ENCODE measurements at regions of chr15 and their contacts with region 1.

Region 1: GRCh38 chr15:77959432-77959879 is 118.1 kb downstream of the TBC1D2B start:
- DNase-seq: peak; percentile 91
- H3K4me3 ChIP-seq: peak overlapping the region; percentile 29 to 39; a peak in 2 of 4 replicates
- H3K27ac ChIP-seq: no peak overlapping the region
- H3K4me1 ChIP-seq: no peaks in the 10 kb centered on the region; a peak in 1 of 4 replicates
- H3K27me3 ChIP-seq: peaks cover 10% of the 10 kb centered on the region; the same call in 1 of the 2 replicates
- CTCF ChIP-seq: peak; percentile 90
- EP300 ChIP-seq: no peak
- RAD21 ChIP-seq: peak; percentile 93

Region 2: DNA sequence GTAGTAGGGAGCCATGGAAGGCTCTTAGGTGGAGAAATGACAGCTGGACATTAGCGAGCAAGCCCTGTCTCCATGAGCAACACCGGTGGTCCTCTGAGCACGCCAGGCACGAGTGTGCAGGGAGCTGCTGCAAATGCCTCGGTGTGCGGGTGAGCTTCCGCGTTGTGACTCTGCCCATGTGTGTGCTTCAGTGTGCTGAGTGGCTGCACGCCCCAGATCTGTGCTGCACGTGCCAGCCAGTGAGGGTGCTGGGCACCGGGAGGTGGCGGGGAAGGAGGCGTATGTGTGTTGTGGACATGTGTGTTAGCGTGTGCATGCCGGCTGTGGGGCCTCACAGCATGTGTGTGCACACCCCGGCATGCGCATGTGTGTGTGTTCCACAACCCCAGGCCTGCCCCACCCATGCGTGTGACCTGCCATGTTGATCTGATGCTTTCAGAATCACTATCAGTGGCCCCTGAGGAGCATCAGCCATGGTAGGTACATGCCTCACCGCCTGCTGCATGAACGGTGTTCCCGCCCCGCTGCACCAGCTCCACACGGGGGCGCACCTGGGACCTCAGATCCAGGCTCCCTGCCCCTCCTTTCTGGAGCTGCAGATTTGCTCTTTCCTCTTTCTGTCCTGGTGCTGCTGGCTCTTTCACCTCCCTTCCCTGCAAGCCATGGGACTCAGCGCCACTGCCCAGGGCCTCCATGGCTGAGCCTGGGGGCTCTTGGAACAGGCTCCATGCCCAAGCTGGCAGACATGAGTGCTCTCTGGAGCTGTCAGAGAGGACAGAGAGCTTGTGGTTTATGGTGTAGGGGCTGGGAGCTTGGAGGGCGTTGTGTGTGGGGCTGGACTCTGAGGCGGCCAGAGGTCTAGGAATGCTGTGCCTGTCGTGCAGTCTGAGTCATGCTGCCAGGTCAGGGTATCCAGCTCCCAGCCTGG is 51.4 kb before region 1 on chr15:
- CTCF ChIA-PET with region 1: interaction called, 11 read pairs
- POLR2A ChIA-PET with region 1: no interaction called
- DNase-seq: no peak
- H3K4me3 ChIP-seq: no peak overlapping the region
- H3K27ac ChIP-seq: no peak overlapping the region
- H3K4me1 ChIP-seq: peaks cover 0 to 2% of the 10 kb centered on the region in 2 experiments; a peak in 1 of 4 replicates
- H3K27me3 ChIP-seq: no peaks in the 10 kb centered on the region
- CTCF ChIP-seq: no peak
- EP300 ChIP-seq: no peak
- RAD21 ChIP-seq: no peak

Measured in SK-N-SH (cell line).